ENCODE measurements at regions of chr19 and their contacts with region 1.

Region 1: GRCh38 chr19:2648528-2648937 is 54.0 kb downstream of the GNG7 start:
- DNase-seq: peak; percentile 88
- ATAC-seq: peak; percentile 78
- H3K4me3 Mint-ChIP-seq: no peak overlapping the region
- H3K27ac Mint-ChIP-seq: no peak overlapping the region
- H3K4me1 Mint-ChIP-seq: no peaks in the 10 kb centered on the region
- H3K27me3 Mint-ChIP-seq: no peaks in the 10 kb centered on the region
- CTCF ChIP-seq: peak; percentile 94

Region 2: DNA sequence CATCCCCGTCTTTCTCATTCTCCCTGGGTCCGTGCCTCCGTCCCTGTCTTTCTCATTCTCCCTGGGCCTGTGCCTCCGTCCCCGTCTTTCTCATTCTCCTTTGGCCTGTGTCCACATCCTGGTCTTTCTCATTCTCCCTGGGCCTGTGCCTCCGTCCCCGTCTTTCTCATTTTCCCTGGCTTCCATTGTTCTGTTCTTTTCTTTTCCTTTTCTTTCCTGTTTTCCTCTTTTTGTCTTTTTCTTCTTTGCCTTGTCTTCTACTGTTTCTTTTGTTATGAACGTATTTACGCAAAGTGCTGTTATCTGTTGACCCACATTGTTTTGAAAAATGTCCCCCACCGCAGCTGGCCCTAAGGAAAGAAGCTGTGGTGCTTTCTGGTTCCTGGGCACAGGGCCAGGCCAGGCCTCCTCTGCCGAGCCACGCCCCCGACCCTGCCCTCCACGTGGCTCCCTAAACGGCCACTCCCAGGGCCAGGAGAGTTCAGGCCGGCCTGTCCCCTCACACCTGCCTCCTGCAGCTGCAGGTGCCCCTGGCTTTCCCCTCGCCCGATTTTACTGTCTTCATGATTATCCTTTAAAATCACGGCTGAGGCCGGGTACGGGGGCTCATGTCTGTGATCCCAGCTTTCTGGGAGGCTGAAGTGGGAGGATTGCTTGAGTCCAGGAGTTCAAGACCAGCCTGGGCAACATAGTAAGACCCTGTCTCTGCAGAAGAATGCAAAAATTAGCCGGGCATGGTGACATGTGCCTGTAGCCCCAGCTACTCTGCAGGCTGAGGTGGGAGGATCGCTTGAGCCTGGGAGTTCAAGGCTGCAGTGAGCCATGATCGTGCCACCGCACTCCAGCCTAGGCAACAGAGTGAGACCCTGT is 302.5 kb before region 1 on chr19:
- CTCF ChIA-PET with region 1: no interaction called
- POLR2A ChIA-PET with region 1: no interaction called
- DNase-seq: no peak
- ATAC-seq: peak; percentile 69
- H3K4me3 Mint-ChIP-seq: no peak overlapping the region
- H3K27ac Mint-ChIP-seq: peak overlapping the region; percentile 52
- H3K4me1 Mint-ChIP-seq: no peaks in the 10 kb centered on the region
- H3K27me3 Mint-ChIP-seq: no peaks in the 10 kb centered on the region
- CTCF ChIP-seq: no peak

Region 3: DNA sequence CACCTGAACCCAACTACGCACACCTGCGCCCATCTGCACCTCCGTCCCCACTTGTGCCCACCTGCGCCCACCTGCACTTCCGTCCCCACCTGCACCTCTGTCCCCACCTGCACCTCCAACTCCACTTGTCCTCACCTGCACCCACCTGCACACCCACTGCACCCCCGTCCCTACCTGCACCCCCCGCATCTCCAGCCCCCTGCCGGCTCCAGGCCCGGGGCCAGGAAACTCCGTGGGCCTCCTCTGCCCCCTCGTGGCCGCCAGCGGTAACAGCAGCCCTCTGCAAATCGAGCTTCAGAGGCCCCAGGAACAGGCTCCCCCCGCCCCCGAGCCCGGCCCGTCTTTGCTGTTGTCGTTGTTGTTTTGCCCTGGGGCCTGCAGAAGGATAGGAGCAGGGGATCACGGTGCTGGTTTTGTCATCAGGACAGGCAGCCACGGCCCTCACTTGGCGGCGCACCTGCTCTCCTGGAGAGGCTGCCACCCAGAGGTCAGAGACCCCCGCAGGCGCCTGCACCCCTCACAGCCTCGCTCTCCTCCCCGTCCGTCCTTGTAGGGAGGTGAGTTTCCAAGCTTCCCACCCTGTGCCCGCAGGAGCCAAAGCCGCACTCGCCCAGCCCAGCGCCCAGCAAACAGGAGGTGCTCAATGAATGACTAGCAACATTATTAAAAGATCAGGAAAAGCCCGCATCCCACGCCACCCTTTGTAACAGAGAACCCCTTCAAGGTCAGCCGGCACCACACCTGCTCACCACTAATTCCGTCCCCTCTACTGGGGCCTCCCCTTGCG is 11.4 kb before region 1 on chr19:
- CTCF ChIA-PET with region 1: interaction called, 37 read pairs
- POLR2A ChIA-PET with region 1: interaction called, 7 read pairs
- DNase-seq: peak; percentile 76
- ATAC-seq: peak; percentile 70
- H3K4me3 Mint-ChIP-seq: peak overlapping the region; percentile 63
- H3K27ac Mint-ChIP-seq: no peak overlapping the region
- H3K4me1 Mint-ChIP-seq: peaks cover 17% of the 10 kb centered on the region
- H3K27me3 Mint-ChIP-seq: no peaks in the 10 kb centered on the region; the same call in 1 of the 2 replicates
- CTCF ChIP-seq: peak; percentile 83; the same call in 1 of the 2 replicates

Region 4: GRCh38 chr19:2702162-2703076 is 53.9 kb after region 1 on chr19 and contains the start of gene GNG7:
- CTCF ChIA-PET with region 1: interaction called, 13 read pairs
- POLR2A ChIA-PET with region 1: no interaction called
- DNase-seq: peak; percentile 96
- ATAC-seq: peak; percentile 99
- H3K4me3 Mint-ChIP-seq: peak within 1 kb of the TSS; percentile 79
- H3K27ac Mint-ChIP-seq: peak within 1 kb of the TSS; percentile 53; the same call in 1 of the 2 replicates
- H3K4me1 Mint-ChIP-seq: peaks cover 16% of the 10 kb centered on the region
- H3K27me3 Mint-ChIP-seq: peaks cover 24% of the 10 kb centered on the region
- CTCF ChIP-seq: no peak
- total RNA-seq, gene GNG7: 9.6 to 14.3 TPM (median 13.2 TPM) in 3 replicates

Region 5: GRCh38 chr19:2722541-2723344 is 74.2 kb after region 1 on chr19:
- CTCF ChIA-PET with region 1: interaction called, 18 read pairs
- POLR2A ChIA-PET with region 1: interaction called, 3 read pairs
- DNase-seq: no peak
- ATAC-seq: no peak
- H3K4me3 Mint-ChIP-seq: no peak overlapping the region; the same call in 1 of the 2 replicates
- H3K27ac Mint-ChIP-seq: no peak overlapping the region
- H3K4me1 Mint-ChIP-seq: peaks cover 11% of the 10 kb centered on the region
- H3K27me3 Mint-ChIP-seq: peaks cover 5% of the 10 kb centered on the region; the same call in 1 of the 2 replicates
- CTCF ChIP-seq: no peak

Region 6: GRCh38 chr19:2750808-2751443 is 102.4 kb after region 1 on chr19:
- CTCF ChIA-PET with region 1: interaction called, 76 read pairs
- POLR2A ChIA-PET with region 1: interaction called, 3 read pairs
- DNase-seq: no peak
- ATAC-seq: no peak
- H3K4me3 Mint-ChIP-seq: no peak overlapping the region
- H3K27ac Mint-ChIP-seq: no peak overlapping the region
- H3K4me1 Mint-ChIP-seq: no peaks in the 10 kb centered on the region
- H3K27me3 Mint-ChIP-seq: peaks cover 9% of the 10 kb centered on the region
- CTCF ChIP-seq: no peak

Region 7: GRCh38 chr19:2770055-2771013 is 121.8 kb after region 1 on chr19:
- CTCF ChIA-PET with region 1: no interaction called
- POLR2A ChIA-PET with region 1: no interaction called
- DNase-seq: no peak
- ATAC-seq: no peak
- H3K4me3 Mint-ChIP-seq: no peak overlapping the region
- H3K27ac Mint-ChIP-seq: no peak overlapping the region
- H3K4me1 Mint-ChIP-seq: no peaks in the 10 kb centered on the region
- H3K27me3 Mint-ChIP-seq: no peaks in the 10 kb centered on the region
- CTCF ChIP-seq: no peak

Region 8: GRCh38 chr19:2840794-2841790 is 192.6 kb after region 1 on chr19 and contains the start of gene ZNF555:
- CTCF ChIA-PET with region 1: interaction called, 14 read pairs
- POLR2A ChIA-PET with region 1: no interaction called
- DNase-seq: peak; percentile 98
- ATAC-seq: peak; percentile 98
- H3K4me3 Mint-ChIP-seq: peak within 1 kb of the TSS; percentile 79
- H3K27ac Mint-ChIP-seq: no peak within 1 kb of the TSS
- H3K4me1 Mint-ChIP-seq: peaks cover 5% of the 10 kb centered on the region
- H3K27me3 Mint-ChIP-seq: peaks cover 8% of the 10 kb centered on the region
- CTCF ChIP-seq: no peak; the same call in 1 of the 2 replicates
- total RNA-seq, gene ZNF555: 6.6 to 7.2 TPM (median 6.6 TPM) in 3 replicates